Right cardiac atrium (tissue), 5 donors: ENCODE measurements at regions of chr2 and their contacts with region 1.

Region 1: DNA sequence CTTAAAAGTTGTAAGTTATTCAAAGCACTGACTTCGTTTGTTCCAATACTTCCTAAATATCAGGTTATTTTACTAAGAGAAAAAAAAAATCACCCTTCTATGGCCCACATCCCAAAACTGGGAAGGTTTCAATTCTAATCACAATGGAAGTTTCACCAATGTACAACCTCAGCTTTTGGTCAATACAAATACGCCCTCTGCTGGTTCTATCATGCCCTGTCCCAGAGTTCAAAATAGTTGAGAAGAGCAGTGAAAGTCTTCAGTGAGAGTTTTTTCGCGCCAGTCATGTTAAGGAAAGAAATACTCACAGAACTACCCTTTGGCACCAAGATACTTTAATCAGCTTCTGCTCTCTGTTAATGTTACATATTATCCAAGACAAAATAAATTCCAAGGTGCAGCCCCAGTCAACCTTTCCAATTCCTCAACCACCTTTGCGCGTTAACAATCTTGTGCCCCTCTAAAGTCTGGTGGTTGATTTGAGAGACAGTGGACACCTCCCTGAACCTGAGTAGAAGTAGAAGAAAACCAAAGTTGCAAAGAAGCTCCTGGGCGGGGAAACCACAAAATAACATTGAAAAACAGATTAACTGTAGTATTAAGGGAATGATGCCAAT is 59.9 kb downstream of the SUMO1 start:
- DNase-seq: no peak
- ATAC-seq: peak; percentile 77 to 84
- H3K4me3 ChIP-seq: no peak overlapping the region
- H3K27ac ChIP-seq: no peak overlapping the region
- H3K4me1 ChIP-seq: no peaks in the 10 kb centered on the region
- H3K27me3 ChIP-seq: no peaks in the 10 kb centered on the region

Region 2: GRCh38 chr2:201795607-201796477 is 382.6 kb before region 1 on chr2:
- intact Hi-C with region 1: loop called in 3 of 4 experiments (anchors 5 to 10 kb)
- DNase-seq: peak in 1 of 3 donors; percentile 37
- ATAC-seq: peak; percentile 40 to 51
- H3K4me3 ChIP-seq: no peak overlapping the region
- H3K27ac ChIP-seq: no peak overlapping the region
- H3K4me1 ChIP-seq: no peaks in the 10 kb centered on the region
- H3K27me3 ChIP-seq: no peaks in the 10 kb centered on the region

Region 3: GRCh38 chr2:201860636-201861066 is 317.8 kb before region 1 on chr2:
- intact Hi-C with region 1: loop called (anchors 2 to 5 kb)
- DNase-seq: peak in 2 of 3 donors; percentile 19 to 55
- ATAC-seq: peak; percentile 82 to 89
- H3K4me3 ChIP-seq: no peak overlapping the region
- H3K27ac ChIP-seq: no peak overlapping the region
- H3K4me1 ChIP-seq: no peaks in the 10 kb centered on the region
- H3K27me3 ChIP-seq: no peaks in the 10 kb centered on the region

Region 4: GRCh38 chr2:202064171-202064880 is 114.1 kb before region 1 on chr2:
- intact Hi-C with region 1: loop called in 1 of 4 experiments (anchors 10 kb)
- DNase-seq: peak in 2 of 3 donors; percentile 30 to 54
- ATAC-seq: peak; percentile 88 to 90
- H3K4me3 ChIP-seq: no peak overlapping the region
- H3K27ac ChIP-seq: no peak overlapping the region
- H3K4me1 ChIP-seq: peaks cover 3% of the 10 kb centered on the region
- H3K27me3 ChIP-seq: no peaks in the 10 kb centered on the region